Activated CD8-positive, alpha-beta T cell treated with anti-CD3 and anti-CD28 coated beads, Interleukin-2, amount 10 ng/mL, durations not matched to agents 7 days and 5 days (primary cell): ENCODE measurements at regions of chr15 and their contacts with region 1.

Region 1: DNA sequence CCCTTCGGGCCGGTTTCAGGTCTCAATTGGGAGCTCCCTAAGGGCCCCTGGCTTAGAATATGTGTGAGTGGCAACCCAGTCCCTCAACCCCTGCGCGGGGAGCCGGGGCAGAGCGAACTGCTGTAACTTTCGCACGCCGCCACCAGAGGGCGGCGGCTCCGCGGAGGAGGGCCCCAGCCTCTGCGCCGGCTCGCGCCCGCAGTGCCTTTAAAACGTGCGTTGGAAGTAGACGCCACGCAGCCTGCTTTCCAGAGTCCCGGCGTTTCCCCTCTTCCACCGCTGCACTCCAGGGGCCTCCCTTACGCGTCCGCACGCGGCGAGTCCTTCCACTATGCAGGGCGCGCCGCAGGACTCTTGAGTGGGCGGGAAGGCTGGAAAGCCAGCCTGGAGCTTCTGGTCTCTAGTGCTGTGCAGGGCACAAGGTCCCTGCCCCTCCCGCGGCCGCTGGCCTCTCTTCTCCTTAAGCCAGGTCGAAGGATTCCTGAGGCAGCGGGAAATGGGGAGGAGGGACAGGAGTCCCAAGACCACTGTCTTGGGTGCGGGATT is 23.7 kb upstream of the RNU6-1 start:
- DNase-seq: peak; percentile 76
- ATAC-seq: peak; percentile 99
- H3K4me3 Mint-ChIP-seq: peak overlapping the region; percentile 45
- H3K27ac Mint-ChIP-seq: no peak overlapping the region
- H3K4me1 Mint-ChIP-seq: peaks cover 5% of the 10 kb centered on the region
- H3K27me3 Mint-ChIP-seq: peaks cover 15% of the 10 kb centered on the region

Region 2: DNA sequence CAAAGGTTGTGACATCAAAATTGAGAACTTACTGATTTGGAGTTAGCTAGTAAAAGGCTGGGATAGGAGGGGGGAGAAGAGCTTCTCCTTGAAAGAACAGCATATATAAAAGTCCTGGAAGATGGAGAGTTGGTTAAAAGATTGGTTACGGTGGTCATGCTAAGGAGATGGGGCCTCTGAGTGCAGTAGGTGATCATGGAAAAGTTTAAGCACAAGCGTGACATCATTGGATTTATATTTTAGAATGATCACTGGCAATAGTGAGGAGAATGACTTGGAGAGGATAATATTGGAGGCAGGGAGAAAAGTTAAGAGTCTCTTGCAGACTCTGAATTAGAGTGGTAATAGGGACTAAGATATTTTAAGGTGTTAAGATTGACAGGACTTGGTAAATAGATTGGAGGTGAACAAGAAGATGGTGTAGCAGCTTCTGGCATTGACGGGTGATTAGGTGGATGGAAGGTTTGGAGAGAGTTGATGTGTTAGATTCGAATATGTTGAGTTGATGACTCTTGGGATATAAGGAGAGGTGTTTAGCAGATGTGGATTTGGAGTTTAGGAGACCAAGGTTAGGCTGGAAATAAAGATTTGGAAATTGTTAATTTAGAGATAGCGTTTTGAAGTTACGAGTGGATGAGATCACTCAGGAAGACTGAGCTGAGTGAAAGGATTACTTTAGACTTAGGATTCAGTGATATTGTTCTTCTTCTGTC is 210.2 kb after region 1 on chr15:
- CTCF ChIA-PET with region 1: no interaction called
- POLR2A ChIA-PET with region 1: no interaction called
- DNase-seq: no peak
- ATAC-seq: no peak
- H3K4me3 Mint-ChIP-seq: no peak overlapping the region
- H3K27ac Mint-ChIP-seq: no peak overlapping the region
- H3K4me1 Mint-ChIP-seq: peaks cover 11% of the 10 kb centered on the region
- H3K27me3 Mint-ChIP-seq: no peaks in the 10 kb centered on the region

Region 3: DNA sequence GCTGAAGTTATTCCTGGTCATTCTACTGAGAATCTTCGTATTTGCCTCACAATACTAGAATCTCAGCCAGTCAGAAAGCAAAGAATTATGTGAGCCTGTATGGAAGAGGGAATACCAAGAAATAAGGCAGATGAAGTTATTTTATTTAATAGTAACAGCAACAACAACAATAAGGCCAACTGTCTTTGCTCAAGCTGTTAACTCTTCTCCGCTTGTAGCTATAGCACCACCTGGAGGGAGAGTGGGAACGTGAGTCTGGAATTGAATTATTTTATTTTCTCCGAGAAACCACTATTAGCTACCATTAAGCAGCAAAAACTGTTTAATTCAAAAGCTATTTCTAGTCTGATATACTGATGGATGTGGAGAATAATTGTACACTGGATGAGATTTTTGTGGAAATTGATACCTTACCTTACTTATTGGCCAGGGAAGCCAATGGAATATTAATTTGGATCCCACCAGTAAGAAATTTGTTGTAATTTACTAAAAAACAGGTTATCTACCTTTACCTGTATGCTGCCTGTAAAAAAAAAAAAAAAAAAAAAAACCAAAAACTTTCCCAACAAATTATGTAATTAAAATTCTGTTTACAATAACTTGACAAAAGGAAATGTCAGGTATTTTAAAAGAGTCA is 291.5 kb after region 1 on chr15:
- CTCF ChIA-PET with region 1: interaction called, 16 read pairs
- POLR2A ChIA-PET with region 1: no interaction called
- DNase-seq: no peak
- ATAC-seq: no peak
- H3K4me3 Mint-ChIP-seq: no peak overlapping the region
- H3K27ac Mint-ChIP-seq: no peak overlapping the region
- H3K4me1 Mint-ChIP-seq: no peaks in the 10 kb centered on the region
- H3K27me3 Mint-ChIP-seq: no peaks in the 10 kb centered on the region